Endothelial cell of umbilical vein (primary cell): ENCODE measurements at regions of chr10 and their contacts with region 1.

Region 1: DNA sequence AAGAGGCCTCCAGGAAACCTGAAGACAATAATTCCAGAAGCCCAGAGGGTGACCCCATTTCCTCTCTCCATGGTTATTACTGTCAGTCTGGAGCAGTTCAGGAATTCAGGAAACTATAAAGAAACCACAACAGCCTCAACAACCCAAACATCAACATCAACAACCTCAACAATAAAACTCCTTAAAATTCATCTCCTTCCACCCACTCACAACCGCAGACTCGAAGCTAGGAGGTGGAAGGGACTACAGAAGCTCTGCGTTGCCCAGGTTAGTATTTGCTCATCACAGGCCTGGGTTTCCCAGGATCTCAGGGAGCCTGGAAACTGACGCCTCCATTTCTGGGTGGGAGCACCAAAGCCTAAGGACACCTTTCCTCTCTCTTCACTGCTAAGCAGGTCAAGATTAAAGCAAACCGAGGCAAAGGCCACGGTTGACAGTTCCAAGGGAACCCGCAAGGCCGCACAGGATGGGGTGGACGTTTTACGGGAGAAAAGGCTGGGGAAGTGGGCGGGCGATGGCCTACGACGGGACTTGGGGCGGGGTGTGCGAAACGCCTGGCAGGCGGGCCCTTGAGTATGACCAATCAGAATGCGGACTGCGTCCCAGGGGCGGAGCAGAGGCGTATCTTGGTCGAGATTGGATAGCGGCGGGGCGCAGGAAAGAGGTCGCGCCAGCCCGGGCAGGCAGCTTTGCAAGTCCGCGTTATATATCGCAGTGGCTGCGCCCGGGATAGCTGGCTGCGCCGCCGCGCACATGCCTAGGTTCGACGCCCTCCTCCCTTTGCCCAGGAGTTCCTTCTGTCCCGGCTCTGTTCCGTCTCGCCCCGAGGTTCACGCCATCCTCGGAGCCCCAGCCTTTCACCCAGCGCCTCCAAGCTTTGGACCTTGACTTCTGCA is at the start of gene ELOVL3:
- DNase-seq: peak; percentile 97
- H3K4me3 ChIP-seq: no peak within 1 kb of the TSS
- H3K27ac ChIP-seq: no peak within 1 kb of the TSS
- H3K4me1 ChIP-seq: peaks cover 12% of the 10 kb centered on the region
- H3K27me3 ChIP-seq: peaks cover 54 to 59% of the 10 kb centered on the region in 2 experiments
- CTCF ChIP-seq: no peak
- POLR2A ChIP-seq: no peak
- total RNA-seq, gene ELOVL3: not detected in 2 replicates

Region 2: DNA sequence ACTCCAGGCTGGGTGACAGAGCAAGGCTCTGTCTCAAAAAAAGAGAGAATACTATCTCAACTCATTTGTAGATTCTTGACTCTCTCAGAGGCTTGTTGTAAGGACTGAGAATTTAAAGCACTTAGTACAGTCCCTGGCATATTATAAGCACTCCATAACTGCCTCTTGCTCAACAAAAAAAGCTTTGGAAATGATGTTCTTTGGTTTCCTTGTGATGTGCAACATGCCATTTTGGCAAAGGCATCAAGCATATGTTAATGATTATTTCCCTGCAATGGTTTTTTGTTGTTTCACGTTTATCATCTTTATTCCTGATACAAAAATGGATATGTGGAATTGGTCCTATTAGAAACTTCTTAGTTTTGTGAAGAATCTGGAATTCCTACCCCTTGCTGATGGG is 58.0 kb before region 1 on chr10:
- CTCF ChIA-PET with region 1: interaction called, 91 read pairs
- POLR2A ChIA-PET with region 1: no interaction called
- dilution Hi-C with region 1: no loop called
- intact Hi-C with region 1: loop called (anchors 1 kb)
- DNase-seq: no peak
- H3K4me3 ChIP-seq: no peak overlapping the region
- H3K27ac ChIP-seq: no peak overlapping the region
- H3K4me1 ChIP-seq: no peaks in the 10 kb centered on the region
- H3K27me3 ChIP-seq: no peaks in the 10 kb centered on the region
- CTCF ChIP-seq: no peak
- POLR2A ChIP-seq: no peak

Region 3: DNA sequence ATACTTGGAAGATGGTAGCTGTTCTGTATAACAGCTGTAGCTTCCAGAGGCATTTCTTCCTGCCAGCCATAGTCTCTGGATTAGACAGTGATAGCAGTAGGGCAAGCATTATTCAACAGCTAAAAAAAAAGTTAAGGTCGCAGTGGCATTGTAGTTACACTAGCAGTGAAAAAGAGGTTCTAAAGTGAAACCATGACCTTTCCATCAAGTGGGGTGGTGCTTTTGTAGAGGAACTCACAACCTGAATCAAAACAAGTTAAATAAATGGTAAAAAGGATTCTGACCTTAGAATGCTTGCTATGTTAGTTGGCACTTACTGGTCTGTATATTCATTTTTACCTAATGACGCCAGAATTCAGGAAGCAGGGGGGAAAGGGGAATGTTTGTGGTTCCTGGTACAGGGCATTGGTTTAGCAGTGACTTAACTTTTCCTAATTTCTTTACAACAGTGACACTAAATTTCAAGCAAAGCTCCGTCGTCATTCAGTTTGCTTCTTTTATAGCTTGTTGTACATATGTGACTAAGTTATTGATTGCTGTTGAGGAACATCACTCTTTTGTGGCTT is 74.5 kb after region 1 on chr10:
- CTCF ChIA-PET with region 1: interaction called, 17 read pairs
- POLR2A ChIA-PET with region 1: no interaction called
- dilution Hi-C with region 1: no loop called
- intact Hi-C with region 1: no loop called
- DNase-seq: peak; percentile 87
- H3K4me3 ChIP-seq: peak overlapping the region in 1 of 3 experiments; percentile 9
- H3K27ac ChIP-seq: peak overlapping the region; percentile 77
- H3K4me1 ChIP-seq: peaks cover 25% of the 10 kb centered on the region
- H3K27me3 ChIP-seq: no peaks in the 10 kb centered on the region
- CTCF ChIP-seq: no peak
- POLR2A ChIP-seq: no peak

Region 4: DNA sequence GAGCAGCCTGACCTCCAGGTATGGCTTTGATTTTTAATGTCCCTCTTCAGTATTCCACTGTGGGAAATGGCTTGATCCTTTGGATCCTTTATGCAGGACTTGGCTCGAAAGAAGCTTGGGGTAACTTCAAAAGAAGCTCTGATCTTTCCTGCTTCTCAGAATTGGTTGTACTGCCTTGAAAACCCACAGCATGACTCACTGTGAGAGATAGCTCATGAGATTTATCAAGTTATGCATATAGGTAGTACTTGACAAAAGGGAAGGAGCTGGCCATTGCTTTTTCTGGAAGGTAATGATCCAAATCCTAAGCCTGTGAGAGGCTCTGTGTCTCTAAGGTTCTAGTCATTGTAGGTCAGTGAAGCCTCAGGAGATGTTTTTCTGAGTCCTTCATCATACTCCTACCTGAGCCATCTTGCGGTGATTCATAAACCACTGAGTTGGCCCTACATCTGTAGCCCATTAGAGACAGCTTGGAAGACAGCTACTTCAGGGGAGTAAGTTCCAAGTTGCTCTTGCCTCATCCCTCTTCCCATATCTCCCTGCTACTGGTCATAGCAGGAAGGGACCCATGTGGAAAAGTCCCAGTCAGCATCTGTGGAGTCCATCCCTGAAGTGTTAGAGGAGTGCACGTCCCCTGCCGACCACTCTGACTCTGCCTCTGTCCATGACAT is 133.0 kb after region 1 on chr10:
- CTCF ChIA-PET with region 1: interaction called, 1,402 read pairs
- POLR2A ChIA-PET with region 1: no interaction called
- dilution Hi-C with region 1: loop called (anchors 25 kb)
- intact Hi-C with region 1: no loop called
- DNase-seq: no peak
- H3K4me3 ChIP-seq: no peak overlapping the region
- H3K27ac ChIP-seq: no peak overlapping the region
- H3K4me1 ChIP-seq: no peaks in the 10 kb centered on the region
- H3K27me3 ChIP-seq: no peaks in the 10 kb centered on the region
- CTCF ChIP-seq: no peak
- POLR2A ChIP-seq: no peak

Region 5: GRCh38 chr10:102394079-102394800 is 168.3 kb after region 1 on chr10:
- CTCF ChIA-PET with region 1: interaction called, 168 read pairs
- POLR2A ChIA-PET with region 1: interaction called, 3 read pairs
- dilution Hi-C with region 1: no loop called
- intact Hi-C with region 1: loop called (anchors 1 kb)
- DNase-seq: peak; percentile 93
- H3K4me3 ChIP-seq: peak overlapping the region; percentile 4 to 60 (median 53)
- H3K27ac ChIP-seq: peak overlapping the region; percentile 87
- H3K4me1 ChIP-seq: peaks cover 14% of the 10 kb centered on the region
- H3K27me3 ChIP-seq: peaks cover 6% of the 10 kb centered on the region in 2 experiments
- CTCF ChIP-seq: no peak
- POLR2A ChIP-seq: no peak

Region 6: GRCh38 chr10:102484021-102484420 is 258.1 kb after region 1 on chr10:
- CTCF ChIA-PET with region 1: interaction called, 5 read pairs
- POLR2A ChIA-PET with region 1: no interaction called
- dilution Hi-C with region 1: no loop called
- intact Hi-C with region 1: loop called (anchors 2 kb)
- DNase-seq: no peak
- H3K4me3 ChIP-seq: no peak overlapping the region
- H3K27ac ChIP-seq: no peak overlapping the region
- H3K4me1 ChIP-seq: no peaks in the 10 kb centered on the region
- H3K27me3 ChIP-seq: no peaks in the 10 kb centered on the region
- CTCF ChIP-seq: no peak
- POLR2A ChIP-seq: no peak